CD8-positive, alpha-beta memory T cell (primary cell): ENCODE measurements at regions of chr15 and their contacts with region 1.

Region 1: GRCh38 chr15:40344631-40345120 is 3.9 kb upstream of the CCDC9B start:
- DNase-seq: peak; percentile 51 to 76 (median 62)
- H3K4me3 ChIP-seq: no peak overlapping the region
- H3K4me3 Mint-ChIP-seq: no peak overlapping the region
- H3K27ac ChIP-seq: no peak overlapping the region
- H3K27ac Mint-ChIP-seq: peak overlapping the region in 1 of 8 donors; percentile 43
- H3K4me1 ChIP-seq: peaks cover 8% of the 10 kb centered on the region
- H3K4me1 Mint-ChIP-seq: no peaks in the 10 kb centered on the region
- H3K27me3 ChIP-seq: no peaks in the 10 kb centered on the region
- H3K27me3 Mint-ChIP-seq: no peaks in the 10 kb centered on the region

Region 2: DNA sequence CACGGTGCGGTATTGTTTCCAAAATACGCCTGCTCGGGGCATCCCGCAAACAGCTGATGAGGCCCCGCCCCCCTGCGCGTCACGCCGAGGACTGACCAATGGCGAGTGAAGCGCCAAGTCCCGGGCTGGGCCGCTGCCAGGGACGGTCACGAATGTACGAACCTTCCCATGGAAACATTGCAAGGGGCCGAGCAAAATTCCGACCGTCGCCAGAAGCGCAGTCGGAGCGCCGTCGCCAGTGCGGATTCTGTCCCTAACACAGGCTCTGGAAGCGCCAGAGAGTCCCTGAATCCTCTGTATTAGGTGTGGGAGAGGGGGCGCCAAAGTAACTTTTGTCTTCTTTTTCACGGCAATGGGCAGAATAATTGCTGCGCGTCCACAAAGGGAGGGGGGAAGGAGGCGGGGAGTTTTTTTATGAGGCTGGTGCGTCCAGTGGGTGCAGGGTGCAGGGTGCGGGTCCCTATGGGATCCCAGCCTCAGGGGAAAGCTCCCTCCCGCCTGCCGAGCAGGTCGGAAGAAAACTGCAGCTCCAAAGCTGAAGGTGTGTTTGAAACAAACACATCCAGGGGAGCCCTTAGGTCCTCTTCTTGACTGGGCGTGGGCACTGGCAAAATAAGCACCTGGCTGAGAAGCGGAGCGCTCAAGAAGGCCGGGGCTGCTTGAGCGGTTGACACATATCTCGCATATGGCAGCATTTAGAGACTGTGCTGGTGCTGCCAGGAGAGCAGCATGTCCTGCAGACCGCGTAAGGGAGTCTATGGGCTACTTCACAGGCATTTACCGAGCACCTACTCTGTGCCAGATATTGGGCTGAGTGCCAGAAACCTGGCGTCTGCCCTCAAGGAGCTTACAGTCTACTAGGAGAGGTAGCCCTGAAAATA is 235.6 kb before region 1 on chr15 and contains the start of gene BMF:
- CTCF ChIA-PET with region 1: no interaction called
- POLR2A ChIA-PET with region 1: no interaction called
- DNase-seq: peak; percentile 87 to 98 (median 95)
- H3K4me3 ChIP-seq: peak within 1 kb of the TSS; percentile 86
- H3K4me3 Mint-ChIP-seq: peak within 1 kb of the TSS; percentile 91 to 99 (median 97)
- H3K27ac ChIP-seq: peak within 1 kb of the TSS; percentile 19
- H3K27ac Mint-ChIP-seq: peak within 1 kb of the TSS; percentile 75 to 99 (median 92)
- H3K4me1 ChIP-seq: peaks cover 38% of the 10 kb centered on the region
- H3K4me1 Mint-ChIP-seq: peaks cover 42 to 51% (median 49%) of the 10 kb centered on the region in 3 donors
- H3K27me3 ChIP-seq: no peaks in the 10 kb centered on the region
- H3K27me3 Mint-ChIP-seq: peaks cover 5 to 14% of the 10 kb centered on the region in 2 donors
- total RNA-seq, gene BMF: 15.3 to 16.8 TPM

Region 3: GRCh38 chr15:40323239-40323952 is 21.3 kb before region 1 on chr15 and contains the start of gene INAFM2:
- CTCF ChIA-PET with region 1: interaction called, 83 read pairs
- POLR2A ChIA-PET with region 1: interaction called, 3 read pairs
- DNase-seq: peak; percentile 86 to 94 (median 90)
- H3K4me3 ChIP-seq: peak within 1 kb of the TSS; percentile 40
- H3K4me3 Mint-ChIP-seq: peak within 1 kb of the TSS; percentile 64 to 89 (median 83)
- H3K27ac ChIP-seq: peak within 1 kb of the TSS; percentile 39
- H3K27ac Mint-ChIP-seq: peak within 1 kb of the TSS; percentile 14 to 96 (median 68)
- H3K4me1 ChIP-seq: peaks cover 23% of the 10 kb centered on the region
- H3K4me1 Mint-ChIP-seq: peaks cover 22 to 42% (median 29%) of the 10 kb centered on the region in 3 donors
- H3K27me3 ChIP-seq: no peaks in the 10 kb centered on the region
- H3K27me3 Mint-ChIP-seq: peaks cover 0 to 3% of the 10 kb centered on the region in 2 donors
- total RNA-seq, gene INAFM2: 13.5 to 15.3 TPM

Region 4: GRCh38 chr15:40357723-40358470 is 13.2 kb after region 1 on chr15 and contains the start of gene DISP2:
- CTCF ChIA-PET with region 1: interaction called, 22 read pairs
- POLR2A ChIA-PET with region 1: no interaction called
- DNase-seq: peak; percentile 87 to 92 (median 88)
- H3K4me3 ChIP-seq: peak within 1 kb of the TSS; percentile 81
- H3K4me3 Mint-ChIP-seq: peak within 1 kb of the TSS; percentile 80 to 91 (median 83)
- H3K27ac ChIP-seq: no peak within 1 kb of the TSS
- H3K27ac Mint-ChIP-seq: peak within 1 kb of the TSS in 4 of 8 donors; percentile 24 to 56 (median 44)
- H3K4me1 ChIP-seq: peaks cover 11% of the 10 kb centered on the region
- H3K4me1 Mint-ChIP-seq: peaks cover 13 to 20% (median 18%) of the 10 kb centered on the region in 3 donors
- H3K27me3 ChIP-seq: no peaks in the 10 kb centered on the region
- H3K27me3 Mint-ChIP-seq: peaks cover 5 to 6% of the 10 kb centered on the region in 2 donors
- total RNA-seq, gene DISP2: 0.18 to 1.1 TPM

Region 5: DNA sequence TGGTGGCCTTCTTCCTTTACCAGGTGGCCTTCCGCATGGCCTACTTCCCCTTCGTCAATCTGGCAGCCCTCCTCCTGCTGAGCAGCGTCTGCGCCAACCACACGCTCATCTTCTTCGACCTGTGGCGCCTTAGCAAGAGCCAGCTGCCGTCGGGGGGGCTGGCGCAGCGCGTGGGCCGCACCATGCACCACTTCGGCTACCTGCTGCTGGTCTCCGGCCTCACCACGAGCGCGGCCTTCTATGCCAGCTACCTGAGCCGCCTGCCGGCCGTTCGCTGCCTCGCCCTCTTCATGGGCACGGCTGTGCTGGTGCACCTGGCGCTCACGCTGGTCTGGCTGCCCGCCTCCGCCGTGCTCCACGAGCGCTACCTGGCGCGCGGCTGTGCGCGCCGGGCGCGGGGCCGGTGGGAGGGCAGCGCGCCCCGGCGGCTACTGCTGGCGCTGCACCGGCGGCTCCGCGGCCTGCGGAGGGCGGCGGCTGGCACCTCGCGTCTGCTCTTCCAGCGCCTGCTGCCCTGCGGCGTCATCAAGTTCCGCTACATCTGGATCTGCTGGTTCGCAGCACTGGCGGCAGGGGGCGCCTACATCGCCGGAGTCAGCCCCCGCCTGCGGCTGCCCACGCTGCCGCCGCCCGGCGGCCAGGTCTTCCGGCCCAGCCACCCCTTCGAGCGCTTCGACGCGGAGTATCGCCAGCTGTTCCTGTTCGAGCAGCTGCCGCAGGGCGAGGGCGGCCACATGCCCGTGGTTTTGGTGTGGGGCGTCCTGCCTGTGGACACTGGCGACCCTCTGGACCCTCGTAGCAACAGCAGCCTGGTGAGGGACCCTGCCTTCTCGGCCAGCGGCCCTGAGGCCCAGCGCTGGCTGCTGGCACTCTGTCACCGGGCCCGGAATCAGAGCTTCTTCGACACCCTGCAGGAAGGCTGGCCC is 23.3 kb after region 1 on chr15:
- CTCF ChIA-PET with region 1: interaction called, 41 read pairs
- POLR2A ChIA-PET with region 1: interaction called, 4 read pairs
- DNase-seq: peak; percentile 81 to 92 (median 87)
- H3K4me3 ChIP-seq: peak overlapping the region; percentile 66
- H3K4me3 Mint-ChIP-seq: peak overlapping the region; percentile 77 to 90 (median 82)
- H3K27ac ChIP-seq: no peak overlapping the region
- H3K27ac Mint-ChIP-seq: peak overlapping the region; percentile 4 to 97 (median 84)
- H3K4me1 ChIP-seq: peaks cover 29% of the 10 kb centered on the region
- H3K4me1 Mint-ChIP-seq: peaks cover 23 to 40% (median 31%) of the 10 kb centered on the region in 3 donors
- H3K27me3 ChIP-seq: no peaks in the 10 kb centered on the region
- H3K27me3 Mint-ChIP-seq: peaks cover 0 to 1% of the 10 kb centered on the region in 2 donors

Region 6: DNA sequence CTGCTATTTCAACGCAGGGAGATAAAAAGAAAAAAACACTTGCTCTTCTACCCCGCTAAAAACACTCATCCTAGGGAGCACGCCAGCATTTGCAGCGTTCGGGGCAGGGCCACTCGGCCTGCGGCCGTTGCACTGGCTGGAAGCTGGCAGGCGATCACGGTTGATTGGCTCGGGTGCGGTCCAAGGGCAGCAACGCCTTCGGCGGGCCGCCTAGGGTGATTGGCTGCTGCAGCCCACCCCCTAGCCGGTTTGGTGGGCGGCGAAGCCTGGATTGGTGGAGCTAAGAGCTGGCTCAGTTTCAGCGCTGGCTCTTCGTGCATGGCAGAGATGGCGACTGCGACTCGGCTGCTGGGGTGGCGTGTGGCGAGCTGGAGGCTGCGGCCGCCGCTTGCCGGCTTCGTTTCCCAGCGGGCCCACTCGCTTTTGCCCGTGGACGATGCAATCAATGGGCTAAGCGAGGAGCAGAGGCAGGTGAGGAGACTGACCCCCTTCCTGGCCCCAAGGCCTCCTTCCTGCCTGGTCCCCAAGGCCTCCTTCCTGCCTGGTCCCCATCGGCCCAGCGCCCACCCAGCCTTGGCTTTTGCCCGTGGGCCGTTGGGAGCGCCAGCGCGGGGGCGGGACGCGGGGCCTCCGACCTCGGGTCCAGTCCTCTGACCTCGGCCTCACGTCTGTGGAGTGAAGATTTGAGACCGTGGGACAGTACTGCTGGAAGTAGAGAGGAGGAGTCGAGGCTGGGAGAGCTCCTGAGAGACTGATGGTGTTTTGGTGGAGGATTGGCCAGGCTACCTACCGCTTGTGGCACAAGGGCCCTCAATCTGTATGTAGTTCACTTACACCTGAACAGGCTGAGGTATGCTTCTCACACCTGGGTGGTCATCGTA is 61.1 kb after region 1 on chr15 and contains the start of gene IVD:
- CTCF ChIA-PET with region 1: interaction called, 32 read pairs
- POLR2A ChIA-PET with region 1: no interaction called
- DNase-seq: peak; percentile 87 to 93 (median 88)
- H3K4me3 ChIP-seq: peak within 1 kb of the TSS; percentile 85
- H3K4me3 Mint-ChIP-seq: peak within 1 kb of the TSS; percentile 86 to 96 (median 91)
- H3K27ac ChIP-seq: peak within 1 kb of the TSS; percentile 57
- H3K27ac Mint-ChIP-seq: peak within 1 kb of the TSS; percentile 68 to 93 (median 88)
- H3K4me1 ChIP-seq: peaks cover 24% of the 10 kb centered on the region
- H3K4me1 Mint-ChIP-seq: peaks cover 31 to 54% (median 45%) of the 10 kb centered on the region in 3 donors
- H3K27me3 ChIP-seq: no peaks in the 10 kb centered on the region
- H3K27me3 Mint-ChIP-seq: no peaks in the 10 kb centered on the region
- total RNA-seq, gene IVD: 68.5 to 80.1 TPM

Region 7: DNA sequence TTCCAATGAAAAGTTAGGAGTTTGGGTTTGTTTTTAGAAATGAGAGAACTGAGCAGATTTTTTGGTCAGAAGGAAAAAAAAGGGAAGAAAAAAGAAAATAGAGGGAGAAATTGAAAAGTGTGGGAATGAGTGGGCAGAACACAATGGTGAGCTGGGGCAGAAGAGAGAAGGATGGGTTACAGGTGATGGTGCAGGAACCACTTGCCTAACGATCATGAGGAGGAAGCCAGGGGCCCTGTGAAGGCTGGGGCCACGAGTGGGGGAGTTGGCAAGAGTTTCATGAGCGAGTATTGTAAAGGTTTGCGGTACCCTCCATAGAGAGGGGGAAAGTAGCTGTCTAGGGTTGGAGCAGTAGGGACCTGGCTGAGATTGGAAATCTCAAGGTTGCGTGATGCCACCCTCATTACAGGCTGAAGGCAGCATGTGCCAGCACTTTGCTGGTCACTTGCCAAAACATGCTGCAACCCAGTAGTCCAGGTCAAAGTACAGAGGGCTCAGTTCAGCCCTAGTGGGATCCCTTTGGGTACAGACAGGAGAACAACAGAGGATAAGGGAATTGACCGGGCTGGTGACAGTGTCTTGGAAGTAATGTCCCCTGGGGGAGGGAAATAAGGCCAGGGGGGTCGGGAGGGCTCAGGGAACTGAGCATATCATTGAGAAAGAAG is 67.6 kb after region 1 on chr15:
- CTCF ChIA-PET with region 1: interaction called, 202 read pairs
- POLR2A ChIA-PET with region 1: no interaction called
- DNase-seq: no peak
- H3K4me3 ChIP-seq: no peak overlapping the region
- H3K4me3 Mint-ChIP-seq: no peak overlapping the region
- H3K27ac ChIP-seq: no peak overlapping the region
- H3K27ac Mint-ChIP-seq: peak overlapping the region in 1 of 8 donors; percentile 52
- H3K4me1 ChIP-seq: peaks cover 3% of the 10 kb centered on the region
- H3K4me1 Mint-ChIP-seq: peaks cover 10 to 22% (median 14%) of the 10 kb centered on the region in 3 donors
- H3K27me3 ChIP-seq: no peaks in the 10 kb centered on the region
- H3K27me3 Mint-ChIP-seq: no peaks in the 10 kb centered on the region